Spleen (tissue), 13 donors: ENCODE measurements at regions of chr3 and their contacts with region 1.

Region 1: DNA sequence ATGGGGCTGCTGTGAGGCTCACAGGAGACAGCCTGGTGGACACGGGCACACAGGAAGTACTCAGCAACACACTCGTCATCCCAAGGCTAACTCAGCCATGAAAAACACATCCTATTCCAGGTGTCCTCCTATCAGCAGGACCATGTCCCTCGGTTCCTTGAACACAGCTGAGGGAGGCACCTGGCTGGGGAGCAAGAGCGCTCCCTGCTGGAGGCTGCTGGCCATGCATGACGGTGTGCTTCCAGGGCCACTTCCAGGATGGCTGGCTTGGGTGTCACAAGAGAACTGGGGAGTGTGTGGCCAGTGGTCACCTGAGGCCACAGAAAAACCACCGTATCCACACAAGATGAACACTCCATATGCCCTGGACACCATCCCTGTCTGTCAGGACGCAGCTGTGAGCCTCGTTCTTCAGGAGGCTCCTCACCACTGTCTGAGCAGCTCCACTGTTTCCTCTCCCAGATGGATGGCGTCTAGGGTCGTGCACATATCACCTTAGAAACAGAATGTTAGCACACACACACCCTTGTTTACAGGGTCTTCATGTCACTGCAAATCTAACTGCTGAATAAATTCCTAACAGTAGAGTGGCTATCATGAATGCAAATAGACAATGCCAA is 31.0 kb downstream of the POC1A start:
- DNase-seq: peak; percentile 92
- H3K4me3 ChIP-seq: no peak overlapping the region
- H3K27ac ChIP-seq: peak overlapping the region; percentile 72 to 88 (median 84)
- H3K4me1 ChIP-seq: peaks cover 11 to 62% (median 46%) of the 10 kb centered on the region in 6 donors
- H3K27me3 ChIP-seq: no peaks in the 10 kb centered on the region
- CTCF ChIP-seq: peak; percentile 83 to 98 (median 94)
- POLR2A ChIP-seq: no peak

Region 2: DNA sequence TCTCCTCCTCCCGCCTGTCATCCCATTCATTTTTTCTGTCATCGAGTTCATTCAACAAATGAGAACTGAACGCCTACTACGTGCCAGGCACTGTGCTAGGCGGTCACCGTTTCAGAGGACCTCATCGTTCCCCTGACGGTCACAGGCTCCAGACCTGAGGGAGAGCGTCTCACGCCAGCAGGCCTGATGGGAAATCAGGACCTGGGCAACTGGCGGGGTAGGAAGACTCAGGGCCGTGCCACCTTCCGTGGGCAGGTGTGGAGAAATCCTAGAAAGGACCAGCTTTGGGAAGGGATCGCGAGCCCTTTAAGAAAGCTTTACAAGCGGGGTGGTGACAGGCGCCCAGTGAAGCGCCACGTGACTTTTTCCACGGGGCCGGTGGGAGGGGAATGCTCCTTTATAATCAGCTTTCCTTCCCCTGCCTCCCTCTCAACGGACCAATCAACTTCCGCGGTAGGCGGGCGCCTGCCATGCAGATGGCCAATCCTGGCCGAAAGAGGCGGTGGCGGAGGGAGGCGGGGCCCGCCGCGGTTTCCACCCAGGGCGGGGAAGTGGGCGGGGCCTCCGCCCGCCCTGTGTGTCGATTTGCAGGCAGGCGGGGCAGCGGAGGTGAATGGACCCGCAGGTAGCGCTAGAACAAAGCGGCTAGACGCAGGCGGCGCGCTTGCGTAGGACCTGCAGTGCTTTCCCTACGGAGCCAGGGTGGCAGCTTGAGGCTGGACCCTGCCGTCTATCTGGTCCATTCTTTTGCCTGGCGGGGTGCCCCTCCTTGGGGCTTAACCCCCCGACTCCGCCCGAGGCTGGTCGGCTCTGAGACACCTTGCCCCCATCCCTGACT is 66.0 kb before region 1 on chr3:
- intact Hi-C with region 1: loop called (anchors 10 kb)
- DNase-seq: peak; percentile 100
- H3K4me3 ChIP-seq: peak overlapping the region; percentile 39 to 93 (median 76)
- H3K27ac ChIP-seq: peak overlapping the region; percentile 81 to 95 (median 89)
- H3K4me1 ChIP-seq: peaks cover 30 to 60% (median 52%) of the 10 kb centered on the region in 6 donors
- H3K27me3 ChIP-seq: no peaks in the 10 kb centered on the region
- CTCF ChIP-seq: peak in 4 of 11 experiments; percentile 17 to 51 (median 30)
- POLR2A ChIP-seq: peak in 1 of 3 donors; percentile 6